H1 (cell line): ENCODE measurements at regions of chr18 and their contacts with region 1.

Region 1: GRCh38 chr18:33210575-33211189 is 229.8 kb downstream of the CCDC178 start:
- DNase-seq: no peak
- H3K4me3 ChIP-seq: no peak overlapping the region
- H3K27ac ChIP-seq: no peak overlapping the region
- H3K4me1 ChIP-seq: no peaks in the 10 kb centered on the region
- H3K27me3 ChIP-seq: no peaks in the 10 kb centered on the region
- CTCF ChIP-seq: peak in 2 of 3 experiments; percentile 51 to 71; a peak in 2 of 4 replicates
- EP300 ChIP-seq: no peak
- POLR2A ChIP-seq: no peak
- RAD21 ChIP-seq: peak; percentile 61 to 65

Region 2: GRCh38 chr18:33146014-33146413 is 64.7 kb before region 1 on chr18:
- CTCF ChIA-PET with region 1: no interaction called
- POLR2A ChIA-PET with region 1: no interaction called
- DNase-seq: no peak
- H3K4me3 ChIP-seq: no peak overlapping the region
- H3K27ac ChIP-seq: no peak overlapping the region
- H3K4me1 ChIP-seq: no peaks in the 10 kb centered on the region
- H3K27me3 ChIP-seq: peaks cover 0 to 2% (median 0%) of the 10 kb centered on the region in 4 experiments; a peak in 1 of 7 replicates
- CTCF ChIP-seq: no peak
- EP300 ChIP-seq: no peak
- POLR2A ChIP-seq: no peak
- RAD21 ChIP-seq: no peak

Region 3: GRCh38 chr18:33169218-33169617 is 41.5 kb before region 1 on chr18:
- CTCF ChIA-PET with region 1: no interaction called
- POLR2A ChIA-PET with region 1: no interaction called
- DNase-seq: no peak
- H3K4me3 ChIP-seq: no peak overlapping the region
- H3K27ac ChIP-seq: no peak overlapping the region
- H3K4me1 ChIP-seq: no peaks in the 10 kb centered on the region
- H3K27me3 ChIP-seq: no peaks in the 10 kb centered on the region
- CTCF ChIP-seq: no peak
- EP300 ChIP-seq: no peak
- POLR2A ChIP-seq: no peak
- RAD21 ChIP-seq: no peak

Region 4: GRCh38 chr18:33195795-33196194 is 14.9 kb before region 1 on chr18:
- CTCF ChIA-PET with region 1: interaction called, 10 read pairs
- POLR2A ChIA-PET with region 1: no interaction called
- DNase-seq: no peak
- H3K4me3 ChIP-seq: no peak overlapping the region
- H3K27ac ChIP-seq: no peak overlapping the region
- H3K4me1 ChIP-seq: no peaks in the 10 kb centered on the region
- H3K27me3 ChIP-seq: no peaks in the 10 kb centered on the region
- CTCF ChIP-seq: no peak
- EP300 ChIP-seq: no peak
- POLR2A ChIP-seq: no peak
- RAD21 ChIP-seq: no peak

Region 5: DNA sequence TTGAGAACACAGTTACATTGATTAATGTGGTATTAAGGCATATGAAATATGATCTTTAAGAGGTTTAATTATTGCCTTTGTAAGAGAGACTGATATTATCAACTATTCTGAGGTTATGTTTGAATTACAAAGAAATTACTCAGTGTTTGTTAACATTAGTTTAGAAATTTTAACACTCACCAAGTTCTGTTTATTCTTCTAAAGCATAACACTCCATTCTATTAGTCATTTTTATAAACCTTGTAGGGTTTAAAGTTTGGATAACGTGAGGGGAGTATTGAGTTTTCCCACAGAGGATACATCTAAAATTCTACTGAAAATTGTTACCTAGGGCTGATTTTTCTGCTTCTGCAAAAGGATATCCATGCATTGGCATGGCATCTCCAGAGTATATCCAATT is 222.2 kb after region 1 on chr18:
- CTCF ChIA-PET with region 1: no interaction called
- POLR2A ChIA-PET with region 1: no interaction called
- DNase-seq: no peak
- H3K4me3 ChIP-seq: no peak overlapping the region
- H3K27ac ChIP-seq: no peak overlapping the region
- H3K4me1 ChIP-seq: no peaks in the 10 kb centered on the region
- H3K27me3 ChIP-seq: no peaks in the 10 kb centered on the region
- CTCF ChIP-seq: no peak
- EP300 ChIP-seq: no peak
- POLR2A ChIP-seq: no peak
- RAD21 ChIP-seq: no peak